PC-3 (cell line): ENCODE measurements at regions of chr3 and their contacts with region 1.

Region 1: GRCh38 chr3:56997675-56998074 is 62.8 kb upstream of the SPATA12 start:
- DNase-seq: no peak
- ATAC-seq: peak; percentile 35
- H3K4me3 ChIP-seq: no peak overlapping the region
- H3K27ac ChIP-seq: no peak overlapping the region
- H3K4me1 ChIP-seq: peaks cover 16% of the 10 kb centered on the region
- H3K27me3 ChIP-seq: no peaks in the 10 kb centered on the region
- CTCF ChIP-seq: no peak

Region 2: GRCh38 chr3:57017459-57017845 is 19.8 kb after region 1 on chr3:
- CTCF ChIA-PET with region 1: interaction called, 10 read pairs
- POLR2A ChIA-PET with region 1: no interaction called
- intact Hi-C with region 1: no loop called
- DNase-seq: peak; percentile 71
- ATAC-seq: peak; percentile 43
- H3K4me3 ChIP-seq: no peak overlapping the region
- H3K27ac ChIP-seq: peak overlapping the region; percentile 71
- H3K4me1 ChIP-seq: peaks cover 31% of the 10 kb centered on the region
- H3K27me3 ChIP-seq: no peaks in the 10 kb centered on the region
- CTCF ChIP-seq: no peak

Region 3: GRCh38 chr3:57068437-57069089 is 70.9 kb after region 1 on chr3:
- CTCF ChIA-PET with region 1: interaction called, 8 read pairs
- POLR2A ChIA-PET with region 1: no interaction called
- intact Hi-C with region 1: loop called (anchors 2 kb)
- DNase-seq: peak; percentile 81
- ATAC-seq: peak; percentile 94
- H3K4me3 ChIP-seq: peak overlapping the region; percentile 41
- H3K27ac ChIP-seq: peak overlapping the region; percentile 74
- H3K4me1 ChIP-seq: peaks cover 25% of the 10 kb centered on the region
- H3K27me3 ChIP-seq: no peaks in the 10 kb centered on the region
- CTCF ChIP-seq: no peak

Region 4: GRCh38 chr3:57078344-57078634 is 80.6 kb after region 1 on chr3:
- CTCF ChIA-PET with region 1: interaction called, 3 read pairs
- POLR2A ChIA-PET with region 1: no interaction called
- intact Hi-C with region 1: loop called (anchors 2 kb)
- DNase-seq: peak; percentile 47
- ATAC-seq: peak; percentile 43
- H3K4me3 ChIP-seq: peak overlapping the region; percentile 99
- H3K27ac ChIP-seq: no peak overlapping the region
- H3K4me1 ChIP-seq: peaks cover 6% of the 10 kb centered on the region
- H3K27me3 ChIP-seq: no peaks in the 10 kb centered on the region
- CTCF ChIP-seq: no peak

Region 5: DNA sequence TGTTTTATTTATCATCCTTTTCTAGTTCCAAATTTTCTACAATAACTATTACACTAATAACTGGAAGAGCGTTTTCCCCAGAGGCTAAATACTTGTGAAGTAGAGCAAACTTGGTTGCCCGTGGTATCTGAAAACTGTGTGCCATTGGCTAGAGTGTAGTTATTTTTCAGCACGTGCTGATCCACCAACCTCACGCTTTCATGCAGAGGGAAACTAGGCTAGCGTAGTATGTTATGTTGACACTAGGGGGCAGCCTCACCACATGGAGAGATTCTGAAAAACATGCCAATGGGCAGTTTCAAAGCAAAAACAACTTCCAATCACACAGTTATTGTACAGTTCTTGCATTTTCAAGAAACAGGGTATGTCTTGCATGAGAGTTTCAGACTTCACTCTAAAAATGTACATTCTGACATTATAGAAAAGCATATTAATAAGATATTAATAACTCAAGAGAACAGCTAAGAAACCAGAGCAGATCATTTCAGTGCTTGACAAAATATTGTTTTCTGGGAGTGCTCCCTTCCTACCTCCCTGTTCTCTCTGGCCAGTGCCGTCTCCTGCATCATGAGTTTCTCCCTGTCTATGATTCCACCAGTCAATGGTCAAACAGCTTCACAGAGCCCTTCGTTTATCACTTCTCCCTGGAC is 102.5 kb after region 1 on chr3:
- CTCF ChIA-PET with region 1: interaction called, 4 read pairs
- POLR2A ChIA-PET with region 1: no interaction called
- intact Hi-C with region 1: loop called (anchors 5 kb)
- DNase-seq: peak; percentile 91
- ATAC-seq: peak; percentile 76
- H3K4me3 ChIP-seq: no peak overlapping the region
- H3K27ac ChIP-seq: no peak overlapping the region
- H3K4me1 ChIP-seq: peaks cover 20% of the 10 kb centered on the region
- H3K27me3 ChIP-seq: no peaks in the 10 kb centered on the region
- CTCF ChIP-seq: peak; percentile 92

Region 6: DNA sequence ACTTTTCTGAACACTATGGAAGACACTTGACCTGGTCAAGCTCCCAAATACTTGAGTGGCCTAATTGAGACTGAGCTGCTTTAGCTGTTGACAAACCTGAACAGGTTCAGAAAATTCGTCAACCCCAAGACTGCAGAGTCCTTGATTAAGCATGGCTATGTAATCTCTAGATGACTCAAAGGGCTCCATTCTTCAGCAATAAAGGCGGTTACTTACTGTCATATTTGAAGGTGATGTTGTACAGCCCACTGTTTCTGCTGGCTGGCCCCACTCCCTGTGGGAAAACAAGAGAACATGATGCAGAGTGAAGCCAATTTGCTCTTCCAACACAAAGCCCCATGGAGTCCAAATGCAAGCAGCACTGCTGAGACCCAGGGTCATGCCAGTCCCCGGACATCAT is 122.4 kb after region 1 on chr3:
- CTCF ChIA-PET with region 1: no interaction called
- POLR2A ChIA-PET with region 1: no interaction called
- intact Hi-C with region 1: no loop called
- DNase-seq: no peak
- ATAC-seq: no peak
- H3K4me3 ChIP-seq: no peak overlapping the region
- H3K27ac ChIP-seq: no peak overlapping the region
- H3K4me1 ChIP-seq: no peaks in the 10 kb centered on the region
- H3K27me3 ChIP-seq: no peaks in the 10 kb centered on the region
- CTCF ChIP-seq: no peak

Region 7: GRCh38 chr3:57158813-57159738 is 161.4 kb after region 1 on chr3:
- CTCF ChIA-PET with region 1: interaction called, 11 read pairs
- POLR2A ChIA-PET with region 1: no interaction called
- intact Hi-C with region 1: loop called (anchors 5 kb)
- DNase-seq: peak; percentile 91
- ATAC-seq: peak; percentile 89
- H3K4me3 ChIP-seq: peak overlapping the region; percentile 5; the same call in 1 of the 2 replicates
- H3K27ac ChIP-seq: no peak overlapping the region
- H3K4me1 ChIP-seq: peaks cover 23% of the 10 kb centered on the region
- H3K27me3 ChIP-seq: no peaks in the 10 kb centered on the region
- CTCF ChIP-seq: peak; percentile 20; the same call in 1 of the 2 replicates

Region 8: DNA sequence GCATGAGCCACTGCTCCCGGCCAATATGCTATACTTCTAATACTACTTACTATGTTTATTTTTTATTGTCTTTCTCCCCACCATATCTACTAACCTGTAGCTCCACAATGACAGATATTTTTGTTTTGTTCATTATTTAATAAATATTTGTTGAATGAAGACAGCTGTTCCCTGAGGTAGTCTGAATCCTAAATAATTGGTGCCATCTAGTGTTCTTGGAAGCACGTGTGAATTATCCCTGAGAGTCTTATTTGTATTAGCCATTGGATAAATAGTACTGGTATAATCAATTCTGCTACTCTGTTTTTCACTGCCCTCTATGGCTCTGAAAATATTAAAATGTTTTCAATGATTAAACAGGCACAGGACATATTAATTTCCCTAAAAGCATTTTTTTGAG is 224.2 kb after region 1 on chr3:
- CTCF ChIA-PET with region 1: no interaction called
- POLR2A ChIA-PET with region 1: no interaction called
- intact Hi-C with region 1: loop called (anchors 1 kb)
- DNase-seq: peak; percentile 62
- ATAC-seq: peak; percentile 82
- H3K4me3 ChIP-seq: no peak overlapping the region
- H3K27ac ChIP-seq: no peak overlapping the region
- H3K4me1 ChIP-seq: peaks cover 10% of the 10 kb centered on the region
- H3K27me3 ChIP-seq: no peaks in the 10 kb centered on the region
- CTCF ChIP-seq: peak; percentile 72